Ascending aorta (tissue), 2 donors: ENCODE measurements at regions of chr6 and their contacts with region 1.

Region 1: GRCh38 chr6:121430514-121431460 is 4.7 kb upstream of the GJA1 start:
- DNase-seq: no peak
- H3K4me3 ChIP-seq: peak overlapping the region in 1 of 2 donors; percentile 45
- H3K27ac ChIP-seq: peak overlapping the region; percentile 24 to 28
- H3K4me1 ChIP-seq: peaks cover 0 to 12% of the 10 kb centered on the region in 2 donors
- H3K27me3 ChIP-seq: no peaks in the 10 kb centered on the region
- CTCF ChIP-seq: peak; percentile 52 to 83 (median 67)

Region 2: DNA sequence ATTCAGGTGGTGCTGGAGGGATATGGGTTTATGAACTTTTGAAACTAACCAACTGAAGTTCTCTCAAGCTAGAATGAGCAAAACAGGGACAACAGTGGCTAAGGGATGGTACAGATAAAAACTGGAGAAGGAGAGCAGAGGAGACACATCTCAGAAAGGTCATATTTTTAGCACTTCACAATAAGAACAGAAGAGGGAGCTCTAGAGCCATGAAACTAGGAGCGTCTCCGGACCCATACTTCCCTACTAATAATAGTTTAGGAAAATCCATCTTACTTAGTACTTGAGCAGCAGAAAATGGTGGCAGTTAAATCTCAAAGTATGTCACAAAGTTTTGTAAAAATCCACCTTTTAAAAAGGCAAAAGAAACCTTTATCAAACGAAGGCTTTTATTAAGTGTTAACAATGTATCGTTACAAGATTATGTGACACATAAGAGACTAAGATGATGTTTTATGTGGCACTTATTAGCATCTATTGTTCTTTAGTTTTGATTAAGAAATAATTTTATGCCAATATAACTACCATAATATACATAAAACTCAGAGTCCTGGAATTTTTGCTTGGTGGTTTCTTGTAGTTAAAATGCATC is 375.1 kb before region 1 on chr6:
- intact Hi-C with region 1: no loop called
- DNase-seq: no peak
- H3K4me3 ChIP-seq: no peak overlapping the region
- H3K27ac ChIP-seq: no peak overlapping the region
- H3K4me1 ChIP-seq: no peaks in the 10 kb centered on the region
- H3K27me3 ChIP-seq: no peaks in the 10 kb centered on the region
- CTCF ChIP-seq: peak; percentile 12 to 59 (median 47)

Region 3: GRCh38 chr6:121615493-121615892 is 184.7 kb after region 1 on chr6:
- intact Hi-C with region 1: loop called (anchors 10 kb)
- DNase-seq: no peak
- H3K4me3 ChIP-seq: no peak overlapping the region
- H3K27ac ChIP-seq: no peak overlapping the region
- H3K4me1 ChIP-seq: no peaks in the 10 kb centered on the region
- H3K27me3 ChIP-seq: no peaks in the 10 kb centered on the region
- CTCF ChIP-seq: no peak

Region 4: GRCh38 chr6:121849477-121849876 is 418.7 kb after region 1 on chr6:
- intact Hi-C with region 1: loop called (anchors 2 kb)
- DNase-seq: peak in 1 of 2 donors; percentile 74
- H3K4me3 ChIP-seq: no peak overlapping the region
- H3K27ac ChIP-seq: no peak overlapping the region
- H3K4me1 ChIP-seq: no peaks in the 10 kb centered on the region
- H3K27me3 ChIP-seq: no peaks in the 10 kb centered on the region
- CTCF ChIP-seq: peak; percentile 45 to 67 (median 67)

Region 5: GRCh38 chr6:122033539-122034181 is 602.9 kb after region 1 on chr6:
- intact Hi-C with region 1: loop called (anchors 1 kb)
- DNase-seq: no peak
- H3K4me3 ChIP-seq: no peak overlapping the region
- H3K27ac ChIP-seq: no peak overlapping the region
- H3K4me1 ChIP-seq: peaks cover 0 to 2% of the 10 kb centered on the region in 2 donors
- H3K27me3 ChIP-seq: no peaks in the 10 kb centered on the region
- CTCF ChIP-seq: peak; percentile 60 to 71 (median 66)

Region 6: DNA sequence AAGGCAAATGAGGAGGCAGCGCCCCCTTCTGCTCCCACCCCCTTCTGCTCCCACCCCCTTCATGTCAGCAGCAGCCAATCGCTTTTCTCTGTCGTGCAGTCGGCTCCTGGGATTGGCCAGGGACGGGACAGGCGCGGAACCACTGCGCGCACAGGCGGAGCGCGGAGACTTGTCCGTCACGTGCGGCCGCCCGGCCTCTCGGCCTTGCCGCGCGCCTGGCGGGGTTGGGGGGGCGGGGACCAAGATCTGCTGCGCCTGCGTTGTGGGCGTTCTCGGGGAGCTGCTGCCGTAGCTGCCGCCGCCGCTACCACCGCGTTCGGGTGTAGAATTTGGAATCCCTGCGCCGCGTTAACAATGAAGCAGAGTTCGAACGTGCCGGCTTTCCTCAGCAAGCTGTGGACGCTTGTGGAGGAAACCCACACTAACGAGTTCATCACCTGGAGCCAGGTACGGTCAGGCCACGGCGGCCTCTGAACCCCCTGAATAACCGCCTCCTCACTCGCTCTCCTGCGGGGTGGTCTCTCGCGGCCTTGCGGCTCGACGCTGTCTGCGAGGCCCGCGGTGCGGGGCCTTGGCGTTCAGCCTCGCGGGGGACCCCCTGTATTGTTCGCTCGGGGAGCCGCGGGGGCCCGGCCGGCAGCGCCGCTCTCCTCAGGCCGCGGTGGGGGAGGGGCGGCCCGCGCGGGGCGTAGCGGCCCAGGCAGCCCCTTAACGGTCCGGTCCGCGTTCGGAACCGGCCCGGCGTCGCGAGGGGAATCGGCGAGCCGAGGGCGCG is 968.8 kb after region 1 on chr6 and contains the start of gene HSF2:
- intact Hi-C with region 1: loop called (anchors 10 kb)
- DNase-seq: peak; percentile 92 to 98
- H3K4me3 ChIP-seq: peak within 1 kb of the TSS; percentile 84 to 99
- H3K27ac ChIP-seq: peak within 1 kb of the TSS; percentile 77
- H3K4me1 ChIP-seq: peaks cover 0 to 2% of the 10 kb centered on the region in 2 donors
- H3K27me3 ChIP-seq: no peaks in the 10 kb centered on the region
- CTCF ChIP-seq: peak in 2 of 3 experiments; percentile 29 to 41
- total RNA-seq, gene HSF2: 26.1 TPM